ENCODE measurements at regions of chr9 and their contacts with region 1.

Region 1: DNA sequence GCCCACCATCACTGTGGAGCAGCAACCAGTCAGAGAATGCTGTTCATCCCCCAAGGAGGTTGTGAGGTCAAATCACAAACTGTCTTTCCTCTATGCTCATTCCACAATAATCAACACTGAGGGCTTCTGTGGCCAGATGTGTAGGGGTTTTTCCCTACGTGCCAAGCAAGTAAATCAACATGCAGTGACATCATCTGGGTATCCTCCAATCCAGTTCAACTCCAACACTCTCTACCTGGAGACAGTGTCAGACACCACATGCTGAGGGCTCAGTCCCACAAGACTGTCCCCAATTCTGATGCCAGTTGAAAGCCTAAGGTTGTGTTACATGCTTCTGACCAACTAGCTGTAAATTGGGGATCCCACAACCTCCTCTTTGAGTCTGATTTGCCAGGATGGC is 57.3 kb upstream of the DMRT1 start:
- DNase-seq: no peak
- H3K4me3 ChIP-seq: no peak overlapping the region
- H3K27ac ChIP-seq: no peak overlapping the region
- H3K4me1 ChIP-seq: no peaks in the 10 kb centered on the region
- H3K27me3 ChIP-seq: no peaks in the 10 kb centered on the region
- CTCF ChIP-seq: no peak
- POLR2A ChIP-seq: no peak

Region 2: DNA sequence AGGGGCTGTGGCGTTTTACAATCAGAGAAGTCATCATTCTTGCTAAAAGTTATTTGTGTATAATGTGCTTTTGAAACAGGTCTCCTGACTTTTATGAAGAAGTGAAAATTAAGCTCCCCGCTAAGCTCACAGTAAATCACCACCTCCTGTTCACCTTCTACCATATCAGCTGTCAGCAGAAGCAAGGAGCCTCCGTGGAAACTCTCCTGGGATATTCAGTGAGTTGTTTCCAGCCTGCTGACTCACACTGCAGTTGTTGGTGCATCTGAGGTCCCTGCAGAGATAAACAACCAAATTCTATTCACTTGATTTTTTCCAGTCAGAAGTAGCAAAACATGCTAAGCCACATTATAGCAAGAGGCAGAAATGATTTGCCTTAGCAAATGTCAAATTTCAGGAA is 412.9 kb before region 1 on chr9:
- intact Hi-C with region 1: loop called (anchors 10 kb)
- DNase-seq: no peak
- H3K4me3 ChIP-seq: no peak overlapping the region
- H3K27ac ChIP-seq: no peak overlapping the region
- H3K4me1 ChIP-seq: peaks cover 0 to 4% (median 0%) of the 10 kb centered on the region in 3 donors
- H3K27me3 ChIP-seq: no peaks in the 10 kb centered on the region
- CTCF ChIP-seq: no peak
- POLR2A ChIP-seq: no peak

Measured in esophagus squamous epithelium (tissue), 5 donors.